Posterior vena cava (tissue), 2 donors: ENCODE measurements at regions of chr5 and their contacts with region 1.

Region 1: DNA sequence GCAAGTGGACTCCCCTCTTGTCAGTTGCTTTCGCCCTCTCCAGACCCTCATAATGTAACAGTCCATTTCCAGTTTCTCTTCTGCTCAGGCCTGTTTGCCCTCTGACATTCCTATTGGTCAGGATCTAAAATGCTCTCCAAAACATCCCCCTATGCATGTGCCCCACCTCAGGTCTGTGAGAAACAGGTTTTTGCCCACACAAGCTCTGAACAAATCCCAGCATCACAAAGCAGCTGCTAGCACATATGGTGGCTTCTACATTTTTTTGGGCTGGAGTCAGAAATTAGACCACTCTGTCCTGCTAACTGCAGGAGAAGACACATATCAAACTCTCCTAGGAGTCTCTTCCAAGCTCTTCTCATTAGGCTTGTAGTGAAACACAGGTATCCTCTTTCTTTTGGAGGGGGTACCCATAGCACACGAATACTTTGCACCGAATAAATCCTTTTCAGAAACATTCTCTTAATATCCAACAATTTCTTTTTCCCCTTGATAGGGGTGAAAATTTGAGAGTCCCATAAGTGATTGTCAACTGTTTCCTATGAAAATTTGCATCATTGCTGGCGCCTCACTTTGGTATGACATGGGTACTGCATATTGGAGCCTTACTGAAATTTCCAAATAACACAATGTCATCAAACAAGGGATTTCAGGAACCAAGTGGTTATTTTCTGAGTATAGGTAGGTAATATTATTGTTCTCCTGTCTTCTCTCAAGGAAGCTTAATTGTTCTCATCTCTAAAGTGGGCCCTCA is 19.3 kb upstream of the HSPA9 start:
- DNase-seq: no peak

Region 2: GRCh38 chr5:138520971-138521370 is 73.5 kb before region 1 on chr5:
- intact Hi-C with region 1: loop called in 1 of 2 experiments (anchors 2 kb)
- DNase-seq: no peak

Region 3: GRCh38 chr5:139844472-139845145 is 1250.1 kb after region 1 on chr5:
- intact Hi-C with region 1: no loop called
- DNase-seq: peak; percentile 91